ENCODE measurements at regions of chr22 and their contacts with region 1.

Region 1: GRCh38 chr22:33274214-33275072 is 216.3 kb upstream of the SYN3 start:
- DNase-seq: peak; percentile 24
- H3K4me3 ChIP-seq: no peak overlapping the region
- H3K27ac ChIP-seq: no peak overlapping the region
- H3K4me1 ChIP-seq: peaks cover 3 to 25% (median 13%) of the 10 kb centered on the region in 4 donors
- H3K27me3 ChIP-seq: no peaks in the 10 kb centered on the region
- CTCF ChIP-seq: peak in 4 of 5 experiments; percentile 19 to 36 (median 28)
- EP300 ChIP-seq: no peak
- POLR2A ChIP-seq: no peak

Region 2: DNA sequence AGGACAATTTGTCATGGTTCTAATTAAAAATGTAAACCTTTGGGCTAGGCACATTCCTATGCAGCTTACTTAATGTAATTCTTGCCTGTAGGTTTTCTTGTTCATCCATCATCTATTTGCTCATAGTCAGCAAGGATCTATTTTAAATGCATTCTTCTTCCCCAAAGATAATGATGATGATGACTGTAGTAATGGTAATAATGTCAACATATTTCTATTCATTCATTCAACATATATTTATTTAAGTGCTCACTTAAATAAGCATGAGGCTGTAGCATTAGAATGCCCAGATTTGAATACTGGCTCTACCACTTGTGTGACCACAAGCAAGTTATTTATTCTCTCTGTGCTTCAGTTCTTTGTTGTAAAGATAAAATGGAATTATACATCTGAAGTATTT is 46.7 kb before region 1 on chr22:
- in situ Hi-C with region 1: no loop called
- intact Hi-C with region 1: no loop called
- DNase-seq: no peak
- H3K4me3 ChIP-seq: no peak overlapping the region
- H3K27ac ChIP-seq: no peak overlapping the region
- H3K4me1 ChIP-seq: no peaks in the 10 kb centered on the region
- H3K27me3 ChIP-seq: no peaks in the 10 kb centered on the region
- CTCF ChIP-seq: no peak
- EP300 ChIP-seq: no peak
- POLR2A ChIP-seq: no peak

Region 3: GRCh38 chr22:33240888-33241475 is 33.5 kb before region 1 on chr22:
- in situ Hi-C with region 1: no loop called
- intact Hi-C with region 1: loop called (anchors 2 kb)
- DNase-seq: no peak
- H3K4me3 ChIP-seq: no peak overlapping the region
- H3K27ac ChIP-seq: no peak overlapping the region
- H3K4me1 ChIP-seq: no peaks in the 10 kb centered on the region
- H3K27me3 ChIP-seq: no peaks in the 10 kb centered on the region
- CTCF ChIP-seq: no peak
- EP300 ChIP-seq: no peak
- POLR2A ChIP-seq: no peak

Region 4: DNA sequence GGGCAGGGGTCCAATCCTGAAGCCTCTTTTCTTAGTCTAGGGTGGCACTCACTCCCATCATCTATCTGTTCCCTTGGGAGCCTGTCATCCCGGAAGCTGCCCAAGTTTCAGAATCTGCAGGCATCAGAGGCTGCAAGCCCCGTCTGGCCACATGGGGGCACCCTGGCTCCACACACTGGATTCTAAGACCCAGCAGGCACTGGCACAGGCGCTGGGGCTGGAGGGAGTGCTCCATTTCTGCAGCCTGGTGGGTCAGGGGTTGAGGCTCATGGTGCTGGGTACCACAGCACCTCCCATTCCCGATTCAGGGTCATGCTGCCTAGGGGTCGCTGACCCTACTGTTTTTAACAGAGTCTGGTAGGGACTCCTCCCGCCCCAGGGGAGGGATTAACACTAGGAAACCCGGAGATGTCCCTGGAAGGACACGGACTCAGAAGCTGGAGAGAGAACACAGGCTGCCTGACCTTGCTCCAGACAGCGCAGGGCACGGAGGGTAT is 27.7 kb after region 1 on chr22:
- in situ Hi-C with region 1: no loop called
- intact Hi-C with region 1: no loop called
- DNase-seq: peak; percentile 85
- H3K4me3 ChIP-seq: no peak overlapping the region
- H3K27ac ChIP-seq: no peak overlapping the region
- H3K4me1 ChIP-seq: no peaks in the 10 kb centered on the region
- H3K27me3 ChIP-seq: no peaks in the 10 kb centered on the region
- CTCF ChIP-seq: peak; percentile 90 to 93 (median 91)
- EP300 ChIP-seq: no peak
- POLR2A ChIP-seq: no peak

Region 5: GRCh38 chr22:34111210-34111824 is 836.9 kb after region 1 on chr22:
- in situ Hi-C with region 1: loop called in 2 of 4 experiments (anchors 25 kb)
- intact Hi-C with region 1: no loop called
- DNase-seq: peak; percentile 12
- H3K4me3 ChIP-seq: no peak overlapping the region
- H3K27ac ChIP-seq: no peak overlapping the region
- H3K4me1 ChIP-seq: peaks cover 0 to 4% (median 2%) of the 10 kb centered on the region in 4 donors
- H3K27me3 ChIP-seq: peaks cover 8% of the 10 kb centered on the region
- CTCF ChIP-seq: peak; percentile 54 to 74 (median 67)
- EP300 ChIP-seq: no peak
- POLR2A ChIP-seq: no peak